GM12878 (cell line): ENCODE measurements at regions of chr11 and their contacts with region 1.

Region 1: DNA sequence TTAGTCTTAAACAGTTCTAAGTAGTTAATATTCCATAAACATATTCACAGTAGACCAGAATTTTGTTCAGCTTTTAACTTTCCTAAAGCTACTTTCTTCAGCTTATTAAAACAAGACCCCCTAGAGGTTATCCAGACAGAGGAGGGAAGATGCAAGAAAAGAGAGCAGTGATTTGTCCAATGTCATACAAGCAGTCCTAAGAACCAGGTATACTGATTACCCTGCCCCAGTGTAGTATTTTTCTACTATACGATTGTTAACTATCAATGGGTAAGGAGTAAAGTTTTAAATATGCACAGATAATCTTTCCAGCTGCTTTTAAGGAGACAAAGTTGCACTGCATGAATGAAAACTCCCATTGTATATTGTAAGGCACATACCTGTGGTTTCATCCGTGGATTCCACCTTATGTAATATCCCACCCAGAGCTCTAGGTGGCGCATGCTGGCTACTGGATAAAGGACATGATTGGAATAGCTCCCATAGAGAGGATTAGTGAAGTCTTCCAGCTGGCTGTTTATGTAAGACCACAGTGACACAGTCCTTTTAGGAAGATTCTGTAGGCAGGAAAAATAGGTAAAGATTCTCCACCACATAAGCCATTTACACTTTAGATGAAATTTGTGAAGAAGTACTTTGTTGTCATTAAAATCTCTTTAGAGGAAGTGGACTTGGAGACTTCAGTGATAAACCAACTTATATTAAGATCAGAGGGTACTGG is 45.6 kb downstream of the CEP57 start:
- DNase-seq: peak; percentile 13
- ATAC-seq: peak; percentile 97
- H3K4me3 ChIP-seq: no peak overlapping the region
- H3K27ac ChIP-seq: no peak overlapping the region
- H3K4me1 ChIP-seq: no peaks in the 10 kb centered on the region
- H3K27me3 ChIP-seq: no peaks in the 10 kb centered on the region
- CTCF ChIP-seq: peak; percentile 86 to 94 (median 88)
- EP300 ChIP-seq: no peak
- POLR2A ChIP-seq: no peak
- RAD21 ChIP-seq: peak; percentile 96

Region 2: GRCh38 chr11:94767761-94768601 is 1067.9 kb before region 1 on chr11 and contains the start of gene AMOTL1:
- CTCF ChIA-PET with region 1: no interaction called
- POLR2A ChIA-PET with region 1: no interaction called
- RAD21 ChIA-PET with region 1: no interaction called
- SMC1A ChIA-PET with region 1: no interaction called
- in situ Hi-C with region 1: no loop called
- intact Hi-C with region 1: no loop called
- DNase-seq: no peak
- ATAC-seq: peak; percentile 31; the same call in 2 of the 3 replicates
- H3K4me3 ChIP-seq: no peak within 1 kb of the TSS
- H3K27ac ChIP-seq: no peak within 1 kb of the TSS
- H3K4me1 ChIP-seq: no peaks in the 10 kb centered on the region
- H3K27me3 ChIP-seq: peaks cover 13 to 16% of the 10 kb centered on the region in 2 experiments
- CTCF ChIP-seq: no peak
- EP300 ChIP-seq: no peak
- POLR2A ChIP-seq: no peak
- RAD21 ChIP-seq: no peak
- polyA plus RNA-seq, gene AMOTL1: not detected

Region 3: GRCh38 chr11:95680169-95680929 is 155.6 kb before region 1 on chr11:
- CTCF ChIA-PET with region 1: no interaction called
- POLR2A ChIA-PET with region 1: no interaction called
- RAD21 ChIA-PET with region 1: no interaction called
- SMC1A ChIA-PET with region 1: no interaction called
- in situ Hi-C with region 1: no loop called
- intact Hi-C with region 1: no loop called
- DNase-seq: no peak
- ATAC-seq: peak; percentile 79
- H3K4me3 ChIP-seq: no peak overlapping the region
- H3K27ac ChIP-seq: no peak overlapping the region; the same call in 1 of the 2 replicates
- H3K4me1 ChIP-seq: peaks cover 7% of the 10 kb centered on the region
- H3K27me3 ChIP-seq: no peaks in the 10 kb centered on the region
- CTCF ChIP-seq: no peak
- EP300 ChIP-seq: no peak
- POLR2A ChIP-seq: no peak
- RAD21 ChIP-seq: no peak

Region 4: GRCh38 chr11:95821640-95822039 is 14.3 kb before region 1 on chr11:
- CTCF ChIA-PET with region 1: interaction called, 10 read pairs
- POLR2A ChIA-PET with region 1: no interaction called
- RAD21 ChIA-PET with region 1: no interaction called
- SMC1A ChIA-PET with region 1: interaction called, 4 read pairs
- in situ Hi-C with region 1: no loop called
- intact Hi-C with region 1: no loop called
- DNase-seq: no peak
- ATAC-seq: no peak
- H3K4me3 ChIP-seq: no peak overlapping the region
- H3K27ac ChIP-seq: no peak overlapping the region
- H3K4me1 ChIP-seq: no peaks in the 10 kb centered on the region
- H3K27me3 ChIP-seq: no peaks in the 10 kb centered on the region
- CTCF ChIP-seq: no peak
- EP300 ChIP-seq: no peak
- POLR2A ChIP-seq: no peak
- RAD21 ChIP-seq: no peak

Region 5: GRCh38 chr11:95849087-95849825 is 13.3 kb after region 1 on chr11:
- CTCF ChIA-PET with region 1: interaction called, 34 read pairs
- POLR2A ChIA-PET with region 1: no interaction called
- RAD21 ChIA-PET with region 1: interaction called, 8 read pairs
- SMC1A ChIA-PET with region 1: interaction called, 15 read pairs
- in situ Hi-C with region 1: no loop called
- intact Hi-C with region 1: no loop called
- DNase-seq: no peak
- ATAC-seq: peak; percentile 80
- H3K4me3 ChIP-seq: no peak overlapping the region
- H3K27ac ChIP-seq: no peak overlapping the region
- H3K4me1 ChIP-seq: no peaks in the 10 kb centered on the region
- H3K27me3 ChIP-seq: no peaks in the 10 kb centered on the region
- CTCF ChIP-seq: peak; percentile 24 to 51 (median 44); a peak in 4 of 6 replicates
- EP300 ChIP-seq: no peak
- POLR2A ChIP-seq: no peak
- RAD21 ChIP-seq: peak; percentile 60

Region 6: GRCh38 chr11:95968585-95968984 is 132.7 kb after region 1 on chr11:
- CTCF ChIA-PET with region 1: interaction called, 5 read pairs
- POLR2A ChIA-PET with region 1: no interaction called
- RAD21 ChIA-PET with region 1: no interaction called
- SMC1A ChIA-PET with region 1: no interaction called
- in situ Hi-C with region 1: no loop called
- intact Hi-C with region 1: loop called (anchors 1 kb)
- DNase-seq: no peak
- ATAC-seq: no peak
- H3K4me3 ChIP-seq: no peak overlapping the region
- H3K27ac ChIP-seq: no peak overlapping the region
- H3K4me1 ChIP-seq: no peaks in the 10 kb centered on the region
- H3K27me3 ChIP-seq: no peaks in the 10 kb centered on the region
- CTCF ChIP-seq: peak in 2 of 3 experiments; percentile 24 to 26; a peak in 2 of 6 replicates
- EP300 ChIP-seq: no peak
- POLR2A ChIP-seq: no peak
- RAD21 ChIP-seq: 0 out of 2 replicates have a peak, but pooled peaks have one; percentile 10

Region 7: DNA sequence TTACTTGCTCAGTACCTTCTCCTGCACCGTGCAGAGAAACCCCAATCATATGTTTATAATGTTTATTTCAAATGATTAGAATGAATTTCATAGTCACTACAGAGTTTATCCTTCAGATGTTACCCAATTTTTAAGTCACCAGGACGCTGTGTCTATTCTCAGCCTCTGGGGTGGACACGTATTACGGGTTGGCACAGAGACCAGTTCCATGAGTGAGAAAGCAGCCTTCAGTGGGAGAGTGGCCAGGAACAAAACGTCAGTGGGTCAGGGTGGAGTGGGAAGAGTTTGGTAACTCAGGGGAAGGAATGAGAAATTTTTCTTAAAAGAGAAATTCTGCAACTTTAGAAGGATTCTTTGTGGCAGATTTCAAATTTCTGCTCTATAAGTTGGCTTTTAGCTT is 165.1 kb after region 1 on chr11:
- CTCF ChIA-PET with region 1: no interaction called
- POLR2A ChIA-PET with region 1: no interaction called
- RAD21 ChIA-PET with region 1: no interaction called
- SMC1A ChIA-PET with region 1: no interaction called
- in situ Hi-C with region 1: no loop called
- intact Hi-C with region 1: no loop called
- DNase-seq: no peak
- ATAC-seq: no peak
- H3K4me3 ChIP-seq: no peak overlapping the region
- H3K27ac ChIP-seq: no peak overlapping the region
- H3K4me1 ChIP-seq: 0 out of 2 replicates have a peak, but pooled peaks cover 6% of the 10 kb centered on the region
- H3K27me3 ChIP-seq: no peaks in the 10 kb centered on the region
- CTCF ChIP-seq: no peak
- EP300 ChIP-seq: no peak
- POLR2A ChIP-seq: no peak
- RAD21 ChIP-seq: no peak

Region 8: DNA sequence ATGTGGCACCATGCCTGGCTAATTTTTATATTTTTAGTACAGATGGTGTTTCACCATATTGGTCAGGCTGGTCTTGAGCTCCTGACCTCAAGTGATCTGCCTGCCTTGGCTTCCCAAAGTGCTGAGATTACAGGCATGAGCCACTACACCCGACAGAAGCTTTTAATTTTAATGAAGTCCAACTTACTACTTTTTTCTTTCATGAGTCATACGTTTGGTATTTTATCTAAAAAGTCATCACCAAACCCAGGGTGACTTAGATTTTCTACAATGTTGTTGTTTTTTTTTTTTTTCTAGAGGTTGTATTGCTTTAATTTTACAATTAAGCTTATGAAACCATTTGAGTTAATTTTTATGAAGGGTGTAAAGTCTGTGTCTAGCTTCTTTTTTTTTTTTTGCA is 588.8 kb after region 1 on chr11:
- CTCF ChIA-PET with region 1: interaction called, 34 read pairs
- POLR2A ChIA-PET with region 1: no interaction called
- RAD21 ChIA-PET with region 1: interaction called, 14 read pairs
- SMC1A ChIA-PET with region 1: interaction called, 7 read pairs
- in situ Hi-C with region 1: no loop called
- intact Hi-C with region 1: loop called (anchors 1 kb)
- DNase-seq: no peak
- ATAC-seq: no peak
- H3K4me3 ChIP-seq: no peak overlapping the region
- H3K27ac ChIP-seq: no peak overlapping the region
- H3K4me1 ChIP-seq: no peaks in the 10 kb centered on the region
- H3K27me3 ChIP-seq: no peaks in the 10 kb centered on the region
- CTCF ChIP-seq: no peak
- EP300 ChIP-seq: no peak
- POLR2A ChIP-seq: no peak
- RAD21 ChIP-seq: no peak